IMR-90 (cell line): ENCODE measurements at regions of chr2 and their contacts with region 1.

Region 1: DNA sequence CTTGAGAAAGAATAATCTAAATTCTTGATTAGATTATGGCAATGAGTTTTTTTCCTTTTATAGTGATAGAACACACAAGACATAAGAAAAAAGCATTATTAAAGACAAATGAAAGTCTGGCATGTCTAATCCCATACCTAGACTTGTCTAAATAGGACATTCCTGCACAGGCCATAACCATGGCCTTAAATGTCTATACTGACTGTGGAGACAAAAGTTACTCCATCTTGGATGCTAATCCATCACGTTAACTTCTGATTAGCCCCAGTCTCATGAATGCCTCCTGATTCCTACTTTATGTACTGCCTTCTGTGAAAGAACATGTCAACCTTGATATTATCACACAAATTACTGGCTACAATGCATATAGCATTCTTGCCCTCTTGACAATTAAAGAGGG is 23.6 kb downstream of the ORC2 start:
- DNase-seq: no peak
- ATAC-seq: no peak
- H3K4me3 ChIP-seq: no peak overlapping the region
- H3K27ac ChIP-seq: no peak overlapping the region
- H3K4me1 ChIP-seq: peaks cover 3% of the 10 kb centered on the region
- H3K27me3 ChIP-seq: no peaks in the 10 kb centered on the region
- CTCF ChIP-seq: no peak
- POLR2A ChIP-seq: no peak
- RAD21 ChIP-seq: no peak

Region 2: GRCh38 chr2:200909958-200910357 is 29.9 kb before region 1 on chr2:
- CTCF ChIA-PET with region 1: no interaction called
- POLR2A ChIA-PET with region 1: interaction called, 10 read pairs
- dilution Hi-C with region 1: no loop called
- in situ Hi-C with region 1: no loop called
- intact Hi-C with region 1: no loop called
- DNase-seq: no peak
- ATAC-seq: no peak
- H3K4me3 ChIP-seq: no peak overlapping the region
- H3K27ac ChIP-seq: no peak overlapping the region
- H3K4me1 ChIP-seq: peaks cover 2% of the 10 kb centered on the region; the same call in 1 of the 2 replicates
- H3K27me3 ChIP-seq: no peaks in the 10 kb centered on the region
- CTCF ChIP-seq: no peak
- POLR2A ChIP-seq: no peak
- RAD21 ChIP-seq: no peak

Region 3: DNA sequence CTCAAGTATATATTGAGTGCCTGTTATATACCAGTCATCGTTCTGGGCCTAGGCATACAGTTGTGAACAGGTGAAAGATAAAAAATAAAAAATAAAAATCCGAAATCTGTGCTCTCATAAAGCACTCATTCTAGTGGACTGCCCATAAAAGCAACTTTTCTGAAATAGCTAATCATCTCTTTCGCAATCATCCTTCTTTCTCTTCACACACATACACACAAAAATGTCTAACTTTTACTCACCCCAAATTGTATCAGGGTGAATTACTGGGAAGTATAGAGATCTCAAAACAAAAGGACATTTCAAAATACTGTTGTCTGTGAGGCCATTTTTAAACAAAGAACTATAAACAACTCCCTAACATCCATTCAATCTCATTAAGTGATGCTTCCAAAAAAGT is 53.3 kb after region 1 on chr2:
- CTCF ChIA-PET with region 1: no interaction called
- POLR2A ChIA-PET with region 1: no interaction called
- dilution Hi-C with region 1: no loop called
- in situ Hi-C with region 1: no loop called
- intact Hi-C with region 1: loop called (anchors 5 kb)
- DNase-seq: peak; percentile 34
- ATAC-seq: peak; percentile 46
- H3K4me3 ChIP-seq: no peak overlapping the region
- H3K27ac ChIP-seq: no peak overlapping the region
- H3K4me1 ChIP-seq: peaks cover 2% of the 10 kb centered on the region; the same call in 1 of the 2 replicates
- H3K27me3 ChIP-seq: no peaks in the 10 kb centered on the region
- CTCF ChIP-seq: no peak
- POLR2A ChIP-seq: no peak
- RAD21 ChIP-seq: no peak